ENCODE measurements at regions of chr7 and their contacts with region 1.

Region 1: DNA sequence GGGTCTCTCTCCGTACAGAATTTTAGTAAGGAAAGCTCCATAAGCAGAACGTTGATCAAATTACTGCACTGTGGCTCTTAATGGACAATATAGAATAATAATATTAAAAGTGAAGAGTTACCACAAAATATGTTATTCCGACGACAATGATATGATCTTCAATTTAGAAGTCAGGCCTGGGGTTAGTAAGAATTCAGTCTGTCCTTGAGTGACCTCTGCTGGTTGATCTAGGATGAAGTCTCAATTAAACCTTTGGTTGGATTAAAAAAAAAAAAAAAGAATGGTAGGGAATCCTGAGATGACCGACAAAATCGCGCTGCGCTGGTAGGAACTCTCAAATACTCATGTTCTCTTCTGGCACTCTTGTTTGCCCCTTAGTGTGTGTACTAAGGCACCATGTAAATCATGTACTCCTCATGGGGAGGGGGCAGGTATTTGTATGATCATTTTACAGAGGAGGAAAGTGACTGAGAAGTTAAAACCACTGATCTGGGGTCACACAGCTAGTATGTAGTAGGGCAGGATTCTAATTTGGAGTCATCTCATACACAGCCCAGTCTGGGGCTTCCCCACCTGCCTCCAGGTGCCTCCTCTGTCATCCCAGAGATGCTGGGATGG is 161.3 kb upstream of the NPVF start:
- DNase-seq: no peak
- H3K4me3 ChIP-seq: no peak overlapping the region
- CTCF ChIP-seq: peak; percentile 30

Region 2: DNA sequence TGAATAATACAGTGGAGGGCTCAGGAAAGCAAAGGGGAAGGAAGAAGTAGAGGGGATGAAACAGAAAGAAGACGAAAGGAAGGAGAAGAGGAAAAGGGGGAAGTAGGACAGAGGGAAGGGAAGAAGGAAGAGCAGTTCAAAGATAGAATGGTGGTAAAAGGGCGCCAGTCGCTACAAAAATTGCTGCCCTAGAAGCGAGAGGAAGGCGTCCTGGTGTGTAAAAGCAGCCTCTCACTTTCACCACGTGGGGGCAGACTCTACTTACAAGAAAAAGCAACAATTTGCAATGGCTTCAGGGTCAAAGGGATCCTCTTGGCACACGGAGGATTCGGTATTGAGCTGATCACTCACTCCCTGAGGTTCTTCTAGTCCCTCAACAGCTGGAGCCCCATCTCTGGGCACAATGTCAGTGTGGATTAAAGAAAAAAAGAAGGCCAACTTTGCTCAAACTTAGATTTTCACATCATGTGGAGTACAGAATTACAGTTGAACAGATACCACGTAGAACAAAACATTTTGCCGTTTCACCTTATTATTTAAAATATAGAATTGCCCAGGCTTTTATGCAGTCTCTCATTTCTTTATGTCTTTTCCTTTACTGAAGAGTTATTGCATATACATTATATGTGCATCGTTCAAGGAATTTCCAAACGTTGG is 129.9 kb before region 1 on chr7:
- CTCF ChIA-PET with region 1: interaction called, 165 read pairs
- POLR2A ChIA-PET with region 1: interaction called, 3 read pairs
- DNase-seq: peak; percentile 36
- H3K4me3 ChIP-seq: no peak overlapping the region
- CTCF ChIP-seq: peak; percentile 83